ENCODE measurements at regions of chrX and their contacts with region 1.

Region 1: GRCh38 chrX:137194164-137194563 is 160.4 kb upstream of the GPR101 start:
- DNase-seq: peak; percentile 37
- ATAC-seq: peak; percentile 55
- H3K4me3 Mint-ChIP-seq: no peak overlapping the region
- H3K27ac Mint-ChIP-seq: no peak overlapping the region
- H3K4me1 Mint-ChIP-seq: no peaks in the 10 kb centered on the region
- H3K27me3 Mint-ChIP-seq: no peaks in the 10 kb centered on the region

Region 2: GRCh38 chrX:136953867-136954787 is 240.0 kb before region 1 on chrX:
- CTCF ChIA-PET with region 1: interaction called, 19 read pairs
- POLR2A ChIA-PET with region 1: no interaction called
- DNase-seq: peak; percentile 73
- ATAC-seq: peak; percentile 84
- H3K4me3 Mint-ChIP-seq: no peak overlapping the region
- H3K27ac Mint-ChIP-seq: no peak overlapping the region
- H3K4me1 Mint-ChIP-seq: no peaks in the 10 kb centered on the region
- H3K27me3 Mint-ChIP-seq: no peaks in the 10 kb centered on the region

Region 3: GRCh38 chrX:137151403-137151802 is 42.8 kb before region 1 on chrX:
- CTCF ChIA-PET with region 1: no interaction called
- POLR2A ChIA-PET with region 1: no interaction called
- DNase-seq: no peak
- ATAC-seq: no peak
- H3K4me3 Mint-ChIP-seq: no peak overlapping the region
- H3K27ac Mint-ChIP-seq: no peak overlapping the region
- H3K4me1 Mint-ChIP-seq: no peaks in the 10 kb centered on the region
- H3K27me3 Mint-ChIP-seq: no peaks in the 10 kb centered on the region

Region 4: DNA sequence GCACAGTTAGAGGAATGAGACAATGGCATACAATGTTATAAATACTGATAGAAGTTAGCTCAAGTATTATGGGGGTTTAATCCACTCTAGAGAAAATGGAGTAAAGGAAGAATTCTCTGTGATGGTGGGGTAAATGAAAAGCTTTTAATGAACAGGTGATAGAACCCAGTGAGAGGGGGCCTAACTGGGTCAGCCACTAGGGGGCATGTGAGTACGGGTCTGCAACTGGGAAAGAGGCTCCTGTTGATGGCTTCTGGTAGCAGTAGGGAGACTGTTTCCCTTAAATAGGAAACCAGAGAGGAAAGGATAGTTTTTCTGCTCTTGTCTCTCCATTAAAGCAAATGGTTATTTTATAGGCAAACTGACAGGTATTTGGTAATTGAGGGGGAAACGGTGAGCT is 27.6 kb before region 1 on chrX:
- CTCF ChIA-PET with region 1: interaction called, 11 read pairs
- POLR2A ChIA-PET with region 1: no interaction called
- DNase-seq: peak; percentile 28
- ATAC-seq: no peak
- H3K4me3 Mint-ChIP-seq: no peak overlapping the region
- H3K27ac Mint-ChIP-seq: no peak overlapping the region
- H3K4me1 Mint-ChIP-seq: no peaks in the 10 kb centered on the region
- H3K27me3 Mint-ChIP-seq: peaks cover 11% of the 10 kb centered on the region

Region 5: DNA sequence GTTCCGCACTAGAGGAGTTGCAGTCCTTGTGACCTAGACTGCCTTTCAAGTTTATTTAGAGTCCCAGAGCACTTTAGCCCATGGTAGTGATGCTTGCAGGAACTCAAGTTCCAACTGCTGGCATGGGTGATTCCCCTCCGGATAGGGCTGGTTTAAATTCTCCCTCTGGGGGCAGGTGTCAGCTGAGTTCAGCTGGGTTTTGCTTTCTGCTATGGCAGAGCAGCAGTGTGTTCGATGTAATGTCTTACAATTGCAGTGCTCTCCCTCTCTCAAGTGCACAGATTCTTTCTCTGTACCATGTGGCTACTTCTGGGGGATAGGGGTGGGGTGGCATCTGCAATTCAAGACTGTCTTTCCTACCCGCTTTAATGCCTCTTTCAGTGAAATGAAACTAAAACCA is 206.9 kb after region 1 on chrX:
- CTCF ChIA-PET with region 1: no interaction called
- POLR2A ChIA-PET with region 1: no interaction called
- DNase-seq: no peak
- ATAC-seq: no peak
- H3K4me3 Mint-ChIP-seq: no peak overlapping the region
- H3K27ac Mint-ChIP-seq: no peak overlapping the region
- H3K4me1 Mint-ChIP-seq: no peaks in the 10 kb centered on the region
- H3K27me3 Mint-ChIP-seq: no peaks in the 10 kb centered on the region